B cell (primary cell): ENCODE measurements at regions of chr5 and their contacts with region 1.

Region 1: GRCh38 chr5:10381803-10382202 is 28.3 kb downstream of the MARCHF6 start:
- DNase-seq: no peak
- ATAC-seq: no peak
- H3K4me3 ChIP-seq: no peak overlapping the region
- H3K4me3 Mint-ChIP-seq: no peak overlapping the region
- H3K27ac ChIP-seq: no peak overlapping the region
- H3K27ac Mint-ChIP-seq: no peak overlapping the region
- H3K4me1 ChIP-seq: no peaks in the 10 kb centered on the region
- H3K4me1 Mint-ChIP-seq: peaks cover 10% of the 10 kb centered on the region
- H3K27me3 ChIP-seq: no peaks in the 10 kb centered on the region
- H3K27me3 Mint-ChIP-seq: no peaks in the 10 kb centered on the region
- CTCF ChIP-seq: no peak

Region 2: DNA sequence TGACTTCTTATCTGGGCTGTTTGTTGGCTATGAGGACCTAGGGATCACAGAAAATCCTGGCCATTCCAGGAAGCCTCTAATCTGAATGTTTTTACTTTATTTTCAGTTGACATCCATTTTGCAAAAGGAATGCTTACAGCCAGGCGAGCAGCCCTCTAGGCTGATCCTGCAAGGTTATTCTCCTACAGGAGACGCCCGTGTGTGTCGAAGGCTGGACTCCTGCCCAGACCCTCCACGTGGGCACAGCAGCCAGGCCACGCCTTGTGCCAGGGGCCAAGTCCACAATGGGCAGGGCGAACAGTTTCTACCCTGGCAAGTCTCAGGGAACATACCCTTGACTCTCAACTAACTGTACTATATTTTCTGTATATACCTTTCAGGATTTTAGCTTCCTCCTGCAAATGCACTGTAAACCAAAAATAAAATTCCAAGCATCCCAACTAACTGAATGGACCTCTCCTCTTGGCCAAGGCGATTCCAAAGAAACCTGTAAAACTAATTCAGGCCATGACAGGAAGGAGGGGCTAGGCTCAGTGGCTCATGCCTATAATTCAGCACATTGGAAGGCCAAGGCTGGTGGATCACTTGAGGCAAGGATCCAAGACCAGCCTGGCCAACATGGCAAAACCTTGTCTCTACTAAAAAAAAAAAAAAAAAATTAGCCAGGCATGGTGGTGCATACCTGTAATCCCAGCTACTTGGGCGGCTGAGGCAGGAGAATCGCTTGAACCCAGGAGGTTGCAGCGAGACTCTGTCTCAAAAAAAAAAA is 79.8 kb before region 1 on chr5:
- CTCF ChIA-PET with region 1: no interaction called
- POLR2A ChIA-PET with region 1: no interaction called
- intact Hi-C with region 1: no loop called
- DNase-seq: no peak
- ATAC-seq: no peak
- H3K4me3 ChIP-seq: no peak overlapping the region
- H3K4me3 Mint-ChIP-seq: no peak overlapping the region
- H3K27ac ChIP-seq: no peak overlapping the region
- H3K27ac Mint-ChIP-seq: no peak overlapping the region
- H3K4me1 ChIP-seq: peaks cover 0 to under 1% of the 10 kb centered on the region in 2 donors
- H3K4me1 Mint-ChIP-seq: no peaks in the 10 kb centered on the region
- H3K27me3 ChIP-seq: peaks cover 0 to 10% (median 7%) of the 10 kb centered on the region in 4 experiments
- H3K27me3 Mint-ChIP-seq: peaks cover 30% of the 10 kb centered on the region
- CTCF ChIP-seq: no peak

Region 3: GRCh38 chr5:10401498-10401897 is 19.7 kb after region 1 on chr5:
- CTCF ChIA-PET with region 1: no interaction called
- POLR2A ChIA-PET with region 1: interaction called, 3 read pairs
- intact Hi-C with region 1: loop called (anchors 2 kb)
- DNase-seq: no peak
- ATAC-seq: no peak
- H3K4me3 ChIP-seq: no peak overlapping the region
- H3K4me3 Mint-ChIP-seq: no peak overlapping the region
- H3K27ac ChIP-seq: no peak overlapping the region
- H3K27ac Mint-ChIP-seq: no peak overlapping the region
- H3K4me1 ChIP-seq: no peaks in the 10 kb centered on the region
- H3K4me1 Mint-ChIP-seq: no peaks in the 10 kb centered on the region
- H3K27me3 ChIP-seq: no peaks in the 10 kb centered on the region
- H3K27me3 Mint-ChIP-seq: no peaks in the 10 kb centered on the region
- CTCF ChIP-seq: no peak